Activated T-helper 1 cell treated with anti-CD3 and anti-CD28 coated beads, Interleukin-12 subunit alpha, Interleukin-12 subunit beta, Interleukin-2, Interleukin-4 antibody, amounts not matched to agents 30 ng/mL and 10 ng/mL and 1 ng/mL, durations not matched to agents 14 hours and 24 hours and 36 hours (primary cell): ENCODE measurements at regions of chr6 and their contacts with region 1.

Region 1: DNA sequence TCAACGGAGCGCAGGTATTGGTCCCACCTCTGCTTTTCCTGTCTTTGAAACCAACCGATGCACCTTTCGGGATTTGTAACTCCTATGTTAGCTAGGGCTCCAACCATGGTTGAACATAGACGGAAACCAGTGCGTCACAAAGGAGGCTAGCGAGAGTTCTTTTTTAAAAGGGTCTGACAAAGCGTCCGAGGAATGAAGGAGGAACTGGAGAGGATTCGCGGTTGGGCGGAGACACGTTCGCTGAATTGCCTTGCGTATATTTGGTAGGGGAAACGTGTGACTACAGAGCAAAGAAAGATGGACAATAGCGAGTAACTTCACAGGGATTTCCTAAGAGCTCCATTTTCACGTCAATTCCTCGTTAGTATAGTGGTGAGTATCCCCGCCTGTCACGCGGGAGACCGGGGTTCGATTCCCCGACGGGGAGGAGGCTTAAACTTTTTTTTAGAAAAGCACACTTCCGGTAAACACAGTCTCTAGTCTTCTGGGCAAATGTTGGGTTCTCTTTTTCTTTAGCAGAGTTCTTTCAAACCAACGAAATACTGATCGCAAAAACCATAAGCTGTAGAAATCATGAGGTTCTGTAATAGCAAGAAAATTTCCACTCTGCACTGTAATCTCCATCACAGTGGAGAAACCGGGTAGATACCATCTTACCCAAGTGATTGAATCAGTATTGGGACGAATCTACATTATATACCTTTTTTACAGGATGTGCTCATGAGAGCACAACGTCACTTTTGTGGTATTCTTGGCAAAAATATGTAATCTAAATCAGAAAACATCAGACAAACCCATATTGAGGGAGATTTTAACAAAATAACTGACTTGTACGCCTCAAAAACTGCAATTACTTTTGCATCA is 6.6 kb upstream of the ZNF184 start:
- DNase-seq: peak; percentile 81
- H3K4me3 Mint-ChIP-seq: no peak overlapping the region
- H3K27ac Mint-ChIP-seq: no peak overlapping the region
- H3K4me1 Mint-ChIP-seq: no peaks in the 10 kb centered on the region
- H3K27me3 Mint-ChIP-seq: peaks cover 10% of the 10 kb centered on the region

Region 2: DNA sequence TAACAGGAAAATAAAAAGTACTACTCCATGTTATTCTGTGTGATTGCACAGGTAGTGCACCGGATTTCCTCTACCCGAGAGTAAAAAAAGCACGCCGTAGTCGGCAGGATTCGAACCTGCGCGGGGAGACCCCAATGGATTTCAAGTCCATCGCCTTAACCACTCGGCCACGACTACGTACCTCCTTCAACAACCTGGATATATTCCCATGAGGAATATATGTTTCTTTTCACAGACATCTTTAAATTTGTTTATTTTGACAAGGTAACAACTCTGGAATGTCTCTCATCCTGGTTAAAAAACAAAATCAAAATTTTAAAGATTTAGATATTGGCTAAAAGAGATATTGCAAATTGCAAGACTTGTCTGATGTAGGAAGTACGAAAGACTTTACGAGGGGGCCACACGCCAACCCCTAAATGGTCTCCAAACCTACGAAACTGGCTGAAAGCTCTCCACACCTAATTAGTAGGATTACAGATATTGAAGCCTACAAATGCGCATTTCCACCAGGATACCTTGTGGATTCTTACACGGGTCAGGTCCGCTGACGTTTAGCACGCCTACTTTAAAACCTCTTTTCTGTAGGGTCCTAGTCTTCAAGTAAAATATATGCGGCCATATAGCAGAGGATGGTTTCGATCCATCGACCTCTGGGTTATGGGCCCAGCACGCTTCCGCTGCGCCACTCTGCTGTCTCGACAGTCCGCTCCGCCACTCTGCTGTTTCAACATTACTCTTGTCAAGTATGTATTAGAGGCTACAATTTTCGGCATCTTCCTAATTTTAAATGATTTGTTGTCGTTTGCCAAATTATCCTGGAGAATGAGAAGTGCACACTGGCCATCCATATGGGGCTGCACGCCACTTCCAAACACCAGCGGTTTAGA is 1166.8 kb before region 1 on chr6:
- intact Hi-C with region 1: loop called (anchors 5 kb)
- DNase-seq: peak; percentile 72
- H3K4me3 Mint-ChIP-seq: peak overlapping the region; percentile 84
- H3K27ac Mint-ChIP-seq: peak overlapping the region; percentile 92
- H3K4me1 Mint-ChIP-seq: peaks cover 51% of the 10 kb centered on the region
- H3K27me3 Mint-ChIP-seq: no peaks in the 10 kb centered on the region

Region 3: GRCh38 chr6:27388293-27389197 is 91.0 kb before region 1 on chr6 and contains the start of gene ZNF391:
- intact Hi-C with region 1: loop called (anchors 2 kb)
- DNase-seq: peak; percentile 50
- H3K4me3 Mint-ChIP-seq: peak within 1 kb of the TSS; percentile 90
- H3K27ac Mint-ChIP-seq: peak within 1 kb of the TSS; percentile 66
- H3K4me1 Mint-ChIP-seq: peaks cover 19% of the 10 kb centered on the region
- H3K27me3 Mint-ChIP-seq: peaks cover 7% of the 10 kb centered on the region
- total RNA-seq, gene ZNF391: 0.37 and 0.44 TPM in 2 replicates

Region 4: DNA sequence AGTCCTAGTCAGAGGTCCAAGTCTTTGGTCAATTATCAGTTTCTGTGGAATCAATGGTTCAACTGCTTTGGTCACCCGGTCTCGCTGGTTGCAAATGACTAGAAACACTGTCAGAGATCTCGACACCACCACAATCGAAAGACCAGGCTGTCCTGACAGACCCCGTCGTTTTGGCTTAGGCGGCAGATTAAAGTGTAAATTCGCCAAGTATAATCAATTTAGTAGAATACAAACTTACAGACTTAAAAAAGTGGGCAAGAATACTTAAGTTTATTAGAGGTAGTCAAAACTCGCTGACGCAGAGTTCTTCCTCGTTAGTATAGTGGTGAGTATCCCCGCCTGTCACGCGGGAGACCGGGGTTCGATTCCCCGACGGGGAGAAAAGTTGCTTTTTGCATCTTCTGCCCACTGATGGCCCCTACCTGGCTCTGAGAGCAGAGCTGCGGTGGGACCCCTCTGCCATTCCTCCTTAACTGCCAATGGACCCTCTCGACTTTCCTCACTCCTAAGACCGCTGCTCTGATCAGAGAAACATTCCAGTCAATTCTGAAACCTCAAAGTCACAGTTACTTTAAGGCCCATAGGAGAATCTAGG is 24.0 kb after region 1 on chr6:
- intact Hi-C with region 1: loop called (anchors 1 kb)
- DNase-seq: peak; percentile 60
- H3K4me3 Mint-ChIP-seq: peak overlapping the region; percentile 90
- H3K27ac Mint-ChIP-seq: peak overlapping the region; percentile 82
- H3K4me1 Mint-ChIP-seq: peaks cover 32% of the 10 kb centered on the region
- H3K27me3 Mint-ChIP-seq: peaks cover 42% of the 10 kb centered on the region

Region 5: GRCh38 chr6:27871924-27872638 is 392.5 kb after region 1 on chr6:
- intact Hi-C with region 1: loop called (anchors 1 kb)
- DNase-seq: peak; percentile 87
- H3K4me3 Mint-ChIP-seq: peak overlapping the region; percentile 88
- H3K27ac Mint-ChIP-seq: peak overlapping the region; percentile 96
- H3K4me1 Mint-ChIP-seq: peaks cover 63% of the 10 kb centered on the region
- H3K27me3 Mint-ChIP-seq: no peaks in the 10 kb centered on the region